ENCODE measurements at regions of chr3 and their contacts with region 1.

Region 1: DNA sequence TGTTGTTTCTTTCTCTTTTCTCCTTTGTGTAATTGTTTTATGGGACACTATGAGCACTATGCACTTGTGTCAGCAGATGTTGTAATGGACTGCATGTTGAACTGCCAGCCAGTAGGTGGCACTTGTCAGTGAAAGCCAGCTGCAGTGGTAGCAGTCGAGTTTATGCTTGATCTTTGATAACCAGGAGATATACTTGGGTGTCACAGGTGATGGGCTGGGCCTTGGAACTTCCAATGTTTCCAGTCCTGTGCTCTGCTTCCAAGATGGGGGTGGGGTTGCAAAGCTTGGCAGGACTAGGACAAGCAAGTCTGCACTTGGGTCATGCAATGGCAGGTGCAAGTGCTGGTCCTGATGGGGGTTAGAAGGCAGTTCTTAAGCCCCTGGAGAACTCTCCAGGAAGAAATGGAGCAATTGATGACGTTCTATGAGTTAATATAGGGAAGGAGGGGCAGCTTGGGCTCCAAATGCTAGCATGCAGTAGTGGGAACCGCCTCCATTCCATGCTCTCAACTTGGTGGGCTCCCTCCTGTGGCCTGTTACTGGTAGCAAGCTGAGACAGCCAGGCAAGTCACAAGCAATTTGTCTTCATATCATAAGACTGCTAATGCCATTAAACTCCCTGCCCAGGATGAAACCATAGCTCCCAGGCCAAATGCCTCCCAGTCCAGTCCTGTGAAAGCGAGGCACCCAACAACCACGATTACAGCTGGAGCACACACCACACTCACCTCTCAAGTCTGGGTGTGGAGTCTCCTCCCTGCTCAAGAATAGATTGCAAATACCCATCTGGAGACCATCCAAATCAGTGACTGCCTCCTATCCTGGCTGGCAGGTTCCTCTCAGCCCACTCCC is 287.2 kb downstream of the CGGBP1 start:
- ATAC-seq: peak in 3 of 8 experiments; percentile 74 to 82 (median 76)
- H3K4me3 ChIP-seq: no peak overlapping the region
- H3K27ac ChIP-seq: no peak overlapping the region
- H3K4me1 ChIP-seq: peaks cover 0 to 2% of the 10 kb centered on the region in 2 donors

Region 2: GRCh38 chr3:87997298-87997697 is 225.7 kb after region 1 on chr3:
- in situ Hi-C with region 1: loop called in 1 of 9 experiments (anchors 25 kb)
- ATAC-seq: peak in 3 of 8 experiments; percentile 33 to 98 (median 96)
- H3K4me3 ChIP-seq: no peak overlapping the region
- H3K27ac ChIP-seq: no peak overlapping the region
- H3K4me1 ChIP-seq: no peaks in the 10 kb centered on the region

Region 3: GRCh38 chr3:88485001-88485400 is 713.4 kb after region 1 on chr3:
- in situ Hi-C with region 1: no loop called
- ATAC-seq: no peak
- H3K4me3 ChIP-seq: no peak overlapping the region
- H3K27ac ChIP-seq: no peak overlapping the region
- H3K4me1 ChIP-seq: no peaks in the 10 kb centered on the region

Measured in motor neuron (in vitro differentiated cells).